H1 (cell line): ENCODE measurements at regions of chr2 and their contacts with region 1.

Region 1: DNA sequence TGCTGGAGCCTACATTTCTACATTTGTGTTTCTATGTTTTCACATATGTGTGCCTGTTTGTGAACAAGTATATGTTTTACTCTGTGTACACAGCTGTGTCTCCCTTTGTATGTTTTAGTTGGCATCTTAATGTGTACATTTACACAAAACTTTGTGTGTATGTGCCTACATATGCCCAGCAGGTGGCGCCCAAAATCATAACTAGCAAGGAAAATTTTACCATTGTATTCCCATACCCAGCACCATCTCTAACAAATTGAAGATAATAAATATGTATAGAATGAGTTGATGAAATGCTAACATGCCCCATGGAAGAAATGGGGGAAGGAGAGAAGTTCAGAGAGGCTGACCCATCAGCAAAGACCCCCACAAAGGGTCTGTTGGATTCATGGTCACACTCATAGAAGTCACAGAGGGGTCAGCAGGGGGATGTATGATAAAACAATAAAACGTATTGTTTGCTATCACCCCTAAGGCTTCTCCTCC is 48.1 kb downstream of the PKDCC start:
- DNase-seq: peak in 1 of 2 experiments; percentile 59
- H3K4me3 ChIP-seq: no peak overlapping the region
- H3K27ac ChIP-seq: no peak overlapping the region
- H3K4me1 ChIP-seq: peaks cover 0 to 9% (median 3%) of the 10 kb centered on the region in 4 experiments; a peak in 4 of 7 replicates
- H3K27me3 ChIP-seq: peaks cover 0 to 3% (median 1%) of the 10 kb centered on the region in 4 experiments; a peak in 2 of 7 replicates
- CTCF ChIP-seq: peak in 2 of 3 experiments; percentile 64 to 67; a peak in 3 of 4 replicates
- EP300 ChIP-seq: no peak
- POLR2A ChIP-seq: no peak
- RAD21 ChIP-seq: peak; percentile 76

Region 2: GRCh38 chr2:41853427-41854216 is 242.3 kb before region 1 on chr2:
- CTCF ChIA-PET with region 1: interaction called, 490 read pairs
- POLR2A ChIA-PET with region 1: no interaction called
- DNase-seq: peak; percentile 21 to 79
- H3K4me3 ChIP-seq: no peak overlapping the region
- H3K27ac ChIP-seq: no peak overlapping the region
- H3K4me1 ChIP-seq: peaks cover 0 to 3% (median 0%) of the 10 kb centered on the region in 4 experiments; a peak in 2 of 7 replicates
- H3K27me3 ChIP-seq: no peaks in the 10 kb centered on the region
- CTCF ChIP-seq: peak in 2 of 3 experiments; percentile 73 to 76; a peak in 3 of 4 replicates
- EP300 ChIP-seq: no peak
- POLR2A ChIP-seq: no peak
- RAD21 ChIP-seq: peak; percentile 92 to 97

Region 3: GRCh38 chr2:41920812-41921211 is 175.2 kb before region 1 on chr2:
- CTCF ChIA-PET with region 1: no interaction called
- POLR2A ChIA-PET with region 1: no interaction called
- DNase-seq: no peak
- H3K4me3 ChIP-seq: no peak overlapping the region
- H3K27ac ChIP-seq: no peak overlapping the region
- H3K4me1 ChIP-seq: no peaks in the 10 kb centered on the region; a peak in 1 of 7 replicates
- H3K27me3 ChIP-seq: no peaks in the 10 kb centered on the region
- CTCF ChIP-seq: no peak
- EP300 ChIP-seq: no peak
- POLR2A ChIP-seq: no peak
- RAD21 ChIP-seq: no peak

Region 4: DNA sequence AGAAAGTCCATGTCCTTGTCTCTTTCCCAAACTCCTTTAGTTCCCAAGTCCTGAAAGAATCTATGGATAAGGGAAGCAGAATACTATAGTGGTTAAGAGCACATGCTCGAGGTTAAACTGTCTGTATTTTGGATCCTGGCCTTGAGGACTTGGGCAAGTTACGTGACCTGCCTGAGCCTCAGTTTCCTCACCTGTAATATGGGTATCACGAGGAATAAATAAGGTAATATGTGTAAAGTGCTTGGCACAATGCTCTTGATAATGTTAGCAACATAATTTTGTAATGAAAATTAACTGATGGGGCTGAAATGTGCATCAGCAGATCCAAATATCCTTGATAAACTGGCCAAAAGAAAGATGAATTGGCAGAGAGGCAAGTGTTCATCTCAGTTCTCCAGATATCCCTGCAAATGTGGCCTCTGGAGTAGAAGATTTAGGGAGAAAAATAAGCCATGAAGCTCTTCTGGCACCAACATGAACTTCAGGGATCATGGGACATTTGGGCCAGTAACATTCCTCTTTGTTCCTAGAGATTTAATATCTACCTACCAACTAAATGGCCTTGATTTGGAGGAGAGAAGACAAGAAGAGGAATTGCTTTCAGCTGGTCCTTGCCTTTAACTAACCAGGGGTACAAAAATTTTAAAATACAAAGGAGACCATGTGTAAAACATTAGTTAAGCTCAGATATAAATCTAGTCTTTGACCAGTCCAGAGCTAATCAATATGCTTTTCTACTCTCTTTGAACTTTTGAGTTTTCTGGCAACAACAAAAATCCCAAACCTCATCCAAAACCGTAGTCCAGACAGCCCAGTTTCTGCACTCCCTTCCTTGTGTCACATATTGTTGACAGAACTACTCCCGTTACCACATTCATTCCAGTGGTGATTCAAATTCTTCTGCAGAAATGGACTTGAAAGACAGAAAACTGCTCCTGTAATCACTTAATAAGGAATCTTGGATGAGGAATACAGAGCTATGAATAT is 20.5 kb after region 1 on chr2:
- CTCF ChIA-PET with region 1: interaction called, 33 read pairs
- POLR2A ChIA-PET with region 1: no interaction called
- DNase-seq: no peak
- H3K4me3 ChIP-seq: no peak overlapping the region
- H3K27ac ChIP-seq: no peak overlapping the region
- H3K4me1 ChIP-seq: peaks cover 0 to 5% (median 4%) of the 10 kb centered on the region in 4 experiments; a peak in 3 of 7 replicates
- H3K27me3 ChIP-seq: peaks cover 0 to 2% (median 0%) of the 10 kb centered on the region in 4 experiments; a peak in 1 of 7 replicates
- CTCF ChIP-seq: no peak
- EP300 ChIP-seq: no peak
- POLR2A ChIP-seq: no peak
- RAD21 ChIP-seq: no peak

Region 5: GRCh38 chr2:42169874-42170521 is 74.0 kb after region 1 on chr2:
- CTCF ChIA-PET with region 1: interaction called, 19 read pairs
- POLR2A ChIA-PET with region 1: interaction called, 3 read pairs
- DNase-seq: no peak
- H3K4me3 ChIP-seq: peak overlapping the region; percentile 80 to 93 (median 86)
- H3K27ac ChIP-seq: peak overlapping the region; percentile 71
- H3K4me1 ChIP-seq: peaks cover 0 to 4% (median 2%) of the 10 kb centered on the region in 4 experiments; a peak in 4 of 7 replicates
- H3K27me3 ChIP-seq: no peaks in the 10 kb centered on the region; a peak in 1 of 7 replicates
- CTCF ChIP-seq: no peak
- EP300 ChIP-seq: no peak
- POLR2A ChIP-seq: no peak
- RAD21 ChIP-seq: no peak

Region 6: GRCh38 chr2:42196403-42197267 is 100.7 kb after region 1 on chr2:
- CTCF ChIA-PET with region 1: interaction called, 25 read pairs
- POLR2A ChIA-PET with region 1: no interaction called
- DNase-seq: peak in 1 of 2 experiments; percentile 9
- H3K4me3 ChIP-seq: no peak overlapping the region
- H3K27ac ChIP-seq: no peak overlapping the region
- H3K4me1 ChIP-seq: peaks cover 0 to 7% (median 2%) of the 10 kb centered on the region in 4 experiments; a peak in 2 of 7 replicates
- H3K27me3 ChIP-seq: no peaks in the 10 kb centered on the region
- CTCF ChIP-seq: peak in 2 of 3 experiments; percentile 68 to 97; a peak in 3 of 4 replicates
- EP300 ChIP-seq: no peak
- POLR2A ChIP-seq: no peak
- RAD21 ChIP-seq: peak; percentile 75 to 77

Region 7: DNA sequence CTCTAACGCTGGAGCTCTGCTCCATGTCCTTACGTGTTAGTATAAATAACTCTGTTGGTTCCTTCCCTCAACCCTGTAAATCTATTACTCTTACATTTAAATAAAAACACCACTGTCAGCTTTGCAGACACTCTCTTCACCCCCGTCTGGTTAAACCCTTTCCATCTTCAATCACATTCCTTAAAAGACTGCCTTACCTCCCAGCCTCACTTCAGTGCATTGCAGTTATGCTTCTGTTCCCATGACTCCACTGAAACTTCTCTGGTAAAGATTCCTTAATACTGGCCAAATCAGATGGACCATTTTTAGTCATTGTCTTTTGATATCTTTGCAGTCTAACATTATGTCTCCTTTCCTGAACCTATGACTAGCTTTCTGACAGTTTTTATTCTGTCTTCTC is 134.9 kb after region 1 on chr2:
- CTCF ChIA-PET with region 1: interaction called, 96 read pairs
- POLR2A ChIA-PET with region 1: interaction called, 3 read pairs
- DNase-seq: no peak
- H3K4me3 ChIP-seq: no peak overlapping the region
- H3K27ac ChIP-seq: no peak overlapping the region
- H3K4me1 ChIP-seq: peaks cover 0 to 6% (median 1%) of the 10 kb centered on the region in 4 experiments; a peak in 3 of 7 replicates
- H3K27me3 ChIP-seq: no peaks in the 10 kb centered on the region
- CTCF ChIP-seq: no peak
- EP300 ChIP-seq: no peak
- POLR2A ChIP-seq: no peak
- RAD21 ChIP-seq: no peak